ENCODE measurements at regions of chr16 and their contacts with region 1.

Region 1: DNA sequence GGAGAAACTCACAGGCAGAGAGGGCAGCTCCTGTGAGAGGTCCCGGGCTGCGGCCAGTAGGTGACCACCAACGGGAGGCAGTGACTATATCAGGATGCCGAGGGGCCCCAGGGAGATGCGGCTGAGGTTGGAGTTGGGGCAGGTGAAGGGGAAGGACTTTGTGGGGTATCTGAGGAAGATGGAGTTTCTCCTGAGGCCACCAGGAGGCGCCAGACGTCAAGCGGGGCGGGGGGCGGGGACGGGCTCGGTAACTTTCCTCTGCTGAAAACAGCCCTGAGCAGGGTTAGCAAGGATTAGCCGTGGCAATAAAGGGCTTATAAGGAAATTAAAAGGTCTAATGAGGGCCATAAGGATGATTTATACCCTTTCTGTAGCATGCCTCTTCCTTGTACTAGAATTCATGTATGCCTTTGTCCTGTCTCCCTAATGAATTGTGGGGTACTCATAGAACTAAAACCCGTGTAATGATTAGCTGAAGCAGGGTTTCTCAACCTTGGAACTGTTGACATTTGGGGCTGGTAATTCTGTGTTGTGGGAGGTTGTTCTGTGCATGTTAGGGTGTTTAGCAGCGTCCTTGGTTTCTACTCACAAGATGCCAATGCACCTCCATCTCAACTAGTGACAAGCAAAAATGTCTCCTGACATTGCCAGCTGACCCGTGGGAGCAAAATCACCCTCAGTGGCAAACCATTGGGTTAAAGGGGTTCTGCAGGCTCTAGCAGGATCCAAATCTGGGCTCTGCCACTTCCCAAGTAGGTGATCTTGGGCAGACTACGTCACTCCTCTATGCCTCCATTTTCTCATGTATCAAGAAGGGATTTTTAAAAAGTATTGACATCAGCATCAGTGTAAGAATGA is 74.8 kb upstream of the GRIN2A start:
- DNase-seq: peak in 6 of 7 donors; percentile 30 to 66 (median 44)
- H3K4me3 ChIP-seq: no peak overlapping the region
- H3K27ac ChIP-seq: peak overlapping the region in 2 of 5 donors; percentile 14 to 77
- H3K4me1 ChIP-seq: peaks cover 3 to 8% of the 10 kb centered on the region in 2 donors
- H3K27me3 ChIP-seq: no peaks in the 10 kb centered on the region
- CTCF ChIP-seq: peak; percentile 53 to 86 (median 78)
- POLR2A ChIP-seq: no peak

Region 2: GRCh38 chr16:10308305-10309193 is 51.5 kb after region 1 on chr16:
- intact Hi-C with region 1: loop called in 1 of 2 experiments (anchors 5 kb)
- DNase-seq: peak in 2 of 7 donors; percentile 19 to 25
- H3K4me3 ChIP-seq: no peak overlapping the region
- H3K27ac ChIP-seq: no peak overlapping the region
- H3K4me1 ChIP-seq: no peaks in the 10 kb centered on the region
- H3K27me3 ChIP-seq: no peaks in the 10 kb centered on the region
- CTCF ChIP-seq: no peak
- POLR2A ChIP-seq: no peak

Region 3: DNA sequence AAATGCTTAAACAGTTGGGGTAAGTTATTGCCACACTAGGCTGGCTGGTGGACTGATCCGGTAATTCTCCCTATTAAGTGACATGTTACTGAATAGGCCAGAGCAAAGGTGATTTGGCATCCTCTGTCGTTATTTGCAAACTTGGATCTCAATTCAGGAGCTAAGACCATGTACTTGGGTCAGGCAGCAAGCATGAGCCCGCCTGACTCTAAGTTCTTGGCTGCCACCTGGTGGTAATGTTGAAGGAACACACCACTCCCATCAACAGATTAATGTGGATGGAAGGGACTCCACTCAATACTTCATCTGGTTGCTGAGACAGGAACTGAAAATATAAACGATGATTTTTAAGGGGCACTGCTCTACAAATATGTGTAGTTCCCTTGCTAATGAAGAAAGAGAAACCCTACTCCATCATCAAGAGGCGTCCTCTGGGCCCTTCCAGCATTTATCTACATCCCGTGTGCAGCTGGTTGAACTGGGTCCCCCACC is 252.6 kb after region 1 on chr16:
- intact Hi-C with region 1: loop called (anchors 5 to 10 kb)
- DNase-seq: peak; percentile 69 to 83 (median 74)
- H3K4me3 ChIP-seq: no peak overlapping the region
- H3K27ac ChIP-seq: no peak overlapping the region
- H3K4me1 ChIP-seq: peaks cover 5 to 6% of the 10 kb centered on the region in 2 donors
- H3K27me3 ChIP-seq: no peaks in the 10 kb centered on the region
- CTCF ChIP-seq: peak; percentile 62 to 92 (median 88)
- POLR2A ChIP-seq: no peak

Region 4: GRCh38 chr16:10737068-10737625 is 480.1 kb after region 1 on chr16:
- intact Hi-C with region 1: loop called in 1 of 2 experiments (anchors 10 kb)
- DNase-seq: peak; percentile 61 to 88 (median 74)
- H3K4me3 ChIP-seq: peak overlapping the region in 1 of 4 donors; percentile 24
- H3K27ac ChIP-seq: peak overlapping the region; percentile 24 to 85 (median 65)
- H3K4me1 ChIP-seq: peaks cover 16 to 18% of the 10 kb centered on the region in 2 donors
- H3K27me3 ChIP-seq: no peaks in the 10 kb centered on the region
- CTCF ChIP-seq: peak; percentile 90 to 98 (median 96)
- POLR2A ChIP-seq: no peak

Measured in adrenal gland (tissue), 19 donors.